WTC11 (cell line): ENCODE measurements at regions of chr3 and their contacts with region 1.

Region 1: GRCh38 chr3:108477511-108478147 is 32.8 kb downstream of the MYH15 start:
- DNase-seq: peak; percentile 49
- ATAC-seq: peak; percentile 86
- H3K4me3 Mint-ChIP-seq: no peak overlapping the region
- H3K27ac Mint-ChIP-seq: no peak overlapping the region
- H3K4me1 Mint-ChIP-seq: peaks cover 7% of the 10 kb centered on the region
- H3K27me3 Mint-ChIP-seq: no peaks in the 10 kb centered on the region
- CTCF ChIP-seq: peak; percentile 58

Region 2: DNA sequence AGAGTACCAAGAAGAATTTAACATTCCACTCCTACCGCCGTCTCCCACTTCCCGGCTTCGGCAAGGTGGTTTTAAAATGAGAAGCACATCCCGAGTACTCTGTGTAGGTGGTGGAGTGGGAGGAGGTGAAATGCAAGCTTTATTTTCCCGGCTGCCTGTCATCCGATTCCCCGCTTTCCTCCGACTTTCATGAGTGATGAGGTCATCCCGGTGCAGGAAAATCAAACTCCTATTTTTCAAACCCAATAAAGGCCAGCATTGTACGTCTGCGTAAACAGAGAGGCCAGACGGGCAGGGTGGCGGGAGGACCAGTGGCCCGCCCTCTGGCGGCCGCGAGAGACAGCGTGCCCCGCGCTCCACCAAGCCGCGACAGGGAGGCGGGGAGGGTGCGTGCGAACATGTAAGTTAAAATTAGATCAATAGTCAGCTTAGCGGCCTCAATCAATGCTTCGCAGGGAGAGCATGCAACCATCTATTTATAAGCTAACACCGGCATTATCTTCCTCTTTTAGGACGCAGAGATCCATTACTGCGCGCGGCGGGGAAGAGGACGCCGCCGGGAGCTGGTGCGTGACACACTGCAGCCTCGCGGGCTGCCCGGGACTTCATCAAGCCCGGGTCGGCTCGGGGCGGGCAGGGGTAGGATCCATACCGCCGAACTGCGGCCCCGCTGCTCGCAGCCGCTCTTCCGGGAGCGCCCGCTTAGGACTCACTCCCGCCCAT is 550.1 kb before region 1 on chr3:
- CTCF ChIA-PET with region 1: interaction called, 10 read pairs
- POLR2A ChIA-PET with region 1: no interaction called
- DNase-seq: peak; percentile 77
- ATAC-seq: peak; percentile 94
- H3K4me3 Mint-ChIP-seq: peak overlapping the region; percentile 81
- H3K27ac Mint-ChIP-seq: no peak overlapping the region
- H3K4me1 Mint-ChIP-seq: peaks cover 8% of the 10 kb centered on the region
- H3K27me3 Mint-ChIP-seq: peaks cover 18% of the 10 kb centered on the region
- CTCF ChIP-seq: peak; percentile 77

Region 3: DNA sequence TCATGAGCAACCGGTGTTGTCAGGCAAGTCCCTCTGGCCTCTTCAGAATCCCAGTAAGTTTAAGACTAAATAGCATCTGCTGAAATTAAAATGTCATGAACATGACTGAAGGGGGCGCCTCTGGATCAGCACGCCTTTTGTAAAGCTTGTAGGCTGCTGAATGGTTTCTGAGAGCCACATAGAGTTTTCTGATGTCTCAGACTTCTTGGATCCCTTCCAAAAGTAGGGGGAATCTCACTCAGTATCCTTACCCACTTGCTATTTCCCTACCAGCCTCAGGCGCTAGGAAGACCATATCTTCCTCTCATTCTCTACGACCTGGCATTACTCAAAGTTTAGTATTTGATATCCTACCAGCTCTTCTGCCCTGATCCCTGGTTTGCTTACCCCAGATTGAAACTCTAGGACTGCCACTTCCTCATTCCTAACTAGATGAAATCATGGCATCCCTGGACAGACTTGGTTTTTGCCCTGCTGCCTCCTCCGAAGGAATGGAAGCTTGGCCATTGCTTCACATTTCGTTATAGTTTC is 324.1 kb before region 1 on chr3:
- CTCF ChIA-PET with region 1: interaction called, 30 read pairs
- POLR2A ChIA-PET with region 1: no interaction called
- DNase-seq: peak; percentile 61
- ATAC-seq: peak; percentile 91
- H3K4me3 Mint-ChIP-seq: no peak overlapping the region
- H3K27ac Mint-ChIP-seq: no peak overlapping the region
- H3K4me1 Mint-ChIP-seq: peaks cover 5% of the 10 kb centered on the region
- H3K27me3 Mint-ChIP-seq: no peaks in the 10 kb centered on the region
- CTCF ChIP-seq: peak; percentile 51; the same call in 1 of the 2 replicates

Region 4: GRCh38 chr3:108406063-108406660 is 71.5 kb before region 1 on chr3:
- CTCF ChIA-PET with region 1: interaction called, 11 read pairs
- POLR2A ChIA-PET with region 1: no interaction called
- DNase-seq: no peak
- ATAC-seq: no peak
- H3K4me3 Mint-ChIP-seq: no peak overlapping the region
- H3K27ac Mint-ChIP-seq: no peak overlapping the region
- H3K4me1 Mint-ChIP-seq: peaks cover 17% of the 10 kb centered on the region
- H3K27me3 Mint-ChIP-seq: no peaks in the 10 kb centered on the region
- CTCF ChIP-seq: no peak

Region 5: GRCh38 chr3:108441071-108441507 is 36.5 kb before region 1 on chr3:
- CTCF ChIA-PET with region 1: interaction called, 13 read pairs
- POLR2A ChIA-PET with region 1: no interaction called
- DNase-seq: no peak
- ATAC-seq: peak; percentile 52
- H3K4me3 Mint-ChIP-seq: no peak overlapping the region
- H3K27ac Mint-ChIP-seq: no peak overlapping the region
- H3K4me1 Mint-ChIP-seq: peaks cover 20% of the 10 kb centered on the region
- H3K27me3 Mint-ChIP-seq: no peaks in the 10 kb centered on the region; the same call in 1 of the 2 replicates
- CTCF ChIP-seq: no peak

Region 6: GRCh38 chr3:108528459-108529252 is 51.0 kb after region 1 on chr3:
- CTCF ChIA-PET with region 1: no interaction called
- POLR2A ChIA-PET with region 1: no interaction called
- DNase-seq: no peak
- ATAC-seq: no peak
- H3K4me3 Mint-ChIP-seq: no peak overlapping the region
- H3K27ac Mint-ChIP-seq: no peak overlapping the region
- H3K4me1 Mint-ChIP-seq: peaks cover 4% of the 10 kb centered on the region; the same call in 1 of the 2 replicates
- H3K27me3 Mint-ChIP-seq: no peaks in the 10 kb centered on the region
- CTCF ChIP-seq: no peak